ENCODE measurements at regions of chr20 and their contacts with region 1.

Region 1: DNA sequence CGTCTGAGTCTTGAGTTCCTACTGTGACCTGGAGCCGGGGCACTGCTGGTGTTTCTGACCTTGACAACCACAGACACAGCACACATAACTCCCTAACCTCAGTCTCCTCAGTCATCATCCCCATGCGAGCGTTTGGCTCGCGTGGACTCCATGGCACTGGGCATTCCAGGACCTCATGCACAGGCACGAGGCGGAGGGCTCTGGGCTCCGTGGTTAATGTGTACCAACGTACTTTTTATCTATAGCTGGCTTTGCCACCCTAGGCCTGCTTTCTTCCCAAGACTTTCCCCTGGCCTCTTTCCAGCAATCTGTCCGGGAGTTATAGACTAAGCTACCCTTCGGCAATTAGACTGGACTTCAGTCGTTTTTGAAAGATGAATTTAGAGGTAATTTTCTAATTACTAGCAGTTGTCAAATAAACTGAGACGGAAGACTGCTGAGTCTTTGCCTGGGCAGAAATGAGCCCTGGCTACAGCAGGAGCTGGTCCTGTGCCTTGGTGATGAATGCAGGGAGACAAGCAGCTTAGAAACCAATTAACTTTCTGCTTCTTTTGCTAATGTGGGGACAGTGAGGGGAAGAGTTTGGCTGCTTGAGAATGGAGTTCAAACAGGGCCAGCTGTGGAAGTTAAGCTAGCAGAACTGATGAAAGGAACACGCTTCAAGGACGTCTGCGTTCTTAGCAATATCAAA is 16.1 kb upstream of the CTCFL start:
- DNase-seq: no peak
- H3K4me3 ChIP-seq: no peak overlapping the region
- H3K27ac ChIP-seq: no peak overlapping the region
- H3K4me1 ChIP-seq: no peaks in the 10 kb centered on the region
- H3K27me3 ChIP-seq: peaks cover 0 to 4% of the 10 kb centered on the region in 2 donors
- CTCF ChIP-seq: no peak
- POLR2A ChIP-seq: no peak

Region 2: GRCh38 chr20:57461726-57462125 is 79.3 kb before region 1 on chr20:
- intact Hi-C with region 1: loop called (anchors 2 kb)
- DNase-seq: no peak
- H3K4me3 ChIP-seq: no peak overlapping the region
- H3K27ac ChIP-seq: no peak overlapping the region
- H3K4me1 ChIP-seq: no peaks in the 10 kb centered on the region
- H3K27me3 ChIP-seq: peaks cover 0 to 7% of the 10 kb centered on the region in 2 donors
- CTCF ChIP-seq: no peak
- POLR2A ChIP-seq: no peak

Region 3: DNA sequence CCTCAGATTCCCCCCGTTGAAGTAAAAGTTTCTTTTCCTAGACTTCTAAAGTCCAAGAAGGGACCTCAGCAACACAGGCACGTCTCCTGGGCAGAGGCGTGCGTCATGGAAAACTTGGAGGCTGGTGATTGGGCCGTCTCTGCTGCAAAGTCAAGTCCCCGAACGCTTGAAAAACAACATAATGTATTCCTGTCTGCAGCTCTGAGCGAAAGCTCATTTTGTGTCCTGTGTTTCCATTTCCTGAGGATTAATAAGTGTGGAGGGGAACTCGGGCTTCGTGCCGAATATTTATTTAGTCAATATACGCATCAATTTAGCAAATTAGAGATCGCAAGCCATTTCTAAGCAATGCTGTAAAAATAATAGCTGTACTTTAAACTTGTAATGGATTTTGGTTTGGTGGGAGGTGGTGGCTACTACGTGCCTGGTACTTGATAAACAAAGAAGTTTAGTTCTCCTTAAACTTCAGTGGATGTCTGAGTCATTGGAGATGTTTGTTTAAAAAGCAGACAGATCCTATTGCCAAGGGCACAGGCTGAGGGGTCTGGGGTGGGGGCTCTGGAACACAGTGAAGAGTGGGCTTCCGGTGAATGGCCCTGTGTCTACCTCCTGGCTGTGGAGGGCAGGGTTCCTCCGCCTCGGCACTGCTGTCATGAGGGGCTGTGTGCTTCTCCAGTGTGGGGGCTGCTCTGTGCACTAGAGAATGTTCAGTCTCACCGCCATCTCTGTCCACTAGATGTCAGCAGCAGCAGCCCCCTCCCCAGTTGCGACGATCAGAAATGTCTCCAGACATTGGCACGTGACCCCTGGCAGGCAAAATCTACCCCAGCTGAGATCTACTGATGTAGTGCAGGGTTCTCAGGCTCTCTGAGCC is 41.6 kb after region 1 on chr20:
- intact Hi-C with region 1: no loop called
- DNase-seq: no peak
- H3K4me3 ChIP-seq: peak overlapping the region in 1 of 3 donors; percentile 27
- H3K27ac ChIP-seq: peak overlapping the region in 1 of 2 donors; percentile 72
- H3K4me1 ChIP-seq: no peaks in the 10 kb centered on the region
- H3K27me3 ChIP-seq: peaks cover 0 to 68% of the 10 kb centered on the region in 2 donors
- CTCF ChIP-seq: no peak
- POLR2A ChIP-seq: no peak